ENCODE measurements at regions of chr22 and their contacts with region 1.

Region 1: DNA sequence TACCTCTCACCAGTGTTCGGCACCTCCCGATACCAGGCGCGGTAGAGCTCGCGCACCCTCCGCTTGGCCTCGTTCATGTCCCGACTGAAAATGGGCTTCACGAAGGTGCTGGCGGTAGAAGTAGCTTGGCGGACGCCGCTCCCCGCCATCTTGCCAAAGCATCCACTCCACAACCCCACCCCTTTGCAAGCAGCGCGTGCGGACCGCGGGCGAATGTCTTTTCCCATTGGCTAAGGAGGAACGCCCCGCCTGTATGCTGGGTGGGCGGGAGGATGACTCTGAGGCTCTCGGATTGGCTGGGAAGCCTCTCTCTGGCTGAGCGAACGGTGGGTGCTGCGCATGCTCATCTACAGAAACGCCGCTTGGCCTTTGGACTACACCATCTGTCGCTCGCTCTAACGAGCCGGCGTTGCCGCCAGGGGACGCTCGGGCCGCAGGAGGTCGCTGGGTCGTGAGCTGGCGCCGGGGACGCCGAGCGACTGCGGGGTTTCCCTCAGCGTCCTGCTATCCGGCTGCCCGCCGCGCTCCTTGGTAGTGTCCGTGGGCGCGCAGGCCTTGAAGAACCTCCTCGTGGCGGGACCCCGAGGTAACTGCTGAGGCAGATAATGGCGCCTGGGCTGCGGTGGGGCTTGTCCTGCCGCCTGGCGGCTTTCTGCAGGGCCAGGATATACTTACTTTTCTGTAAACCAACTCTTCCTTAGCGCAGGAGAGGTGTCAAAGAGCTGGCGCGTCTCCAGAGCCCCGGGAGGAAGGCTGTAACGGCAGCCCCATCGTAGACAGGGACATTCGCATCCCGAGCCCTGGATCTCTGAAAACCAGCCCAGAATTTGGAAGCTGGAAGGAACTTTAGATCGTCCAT is at the start of gene NDUFA6:
- DNase-seq: peak; percentile 99
- H3K4me3 Mint-ChIP-seq: peak within 1 kb of the TSS; percentile 98
- H3K27ac Mint-ChIP-seq: peak within 1 kb of the TSS; percentile 100
- H3K4me1 Mint-ChIP-seq: peaks cover 34% of the 10 kb centered on the region
- H3K27me3 Mint-ChIP-seq: no peaks in the 10 kb centered on the region

Region 2: GRCh38 chr22:41966607-41967240 is 124.1 kb before region 1 on chr22:
- CTCF ChIA-PET with region 1: interaction called, 17 read pairs
- DNase-seq: peak; percentile 62
- H3K4me3 Mint-ChIP-seq: no peak overlapping the region
- H3K27ac Mint-ChIP-seq: no peak overlapping the region
- H3K4me1 Mint-ChIP-seq: peaks cover 2% of the 10 kb centered on the region
- H3K27me3 Mint-ChIP-seq: peaks cover 52% of the 10 kb centered on the region

Region 3: GRCh38 chr22:42061041-42061440 is 29.8 kb before region 1 on chr22:
- CTCF ChIA-PET with region 1: no interaction called
- DNase-seq: no peak
- H3K4me3 Mint-ChIP-seq: no peak overlapping the region
- H3K27ac Mint-ChIP-seq: peak overlapping the region; percentile 60
- H3K4me1 Mint-ChIP-seq: no peaks in the 10 kb centered on the region
- H3K27me3 Mint-ChIP-seq: no peaks in the 10 kb centered on the region

Region 4: DNA sequence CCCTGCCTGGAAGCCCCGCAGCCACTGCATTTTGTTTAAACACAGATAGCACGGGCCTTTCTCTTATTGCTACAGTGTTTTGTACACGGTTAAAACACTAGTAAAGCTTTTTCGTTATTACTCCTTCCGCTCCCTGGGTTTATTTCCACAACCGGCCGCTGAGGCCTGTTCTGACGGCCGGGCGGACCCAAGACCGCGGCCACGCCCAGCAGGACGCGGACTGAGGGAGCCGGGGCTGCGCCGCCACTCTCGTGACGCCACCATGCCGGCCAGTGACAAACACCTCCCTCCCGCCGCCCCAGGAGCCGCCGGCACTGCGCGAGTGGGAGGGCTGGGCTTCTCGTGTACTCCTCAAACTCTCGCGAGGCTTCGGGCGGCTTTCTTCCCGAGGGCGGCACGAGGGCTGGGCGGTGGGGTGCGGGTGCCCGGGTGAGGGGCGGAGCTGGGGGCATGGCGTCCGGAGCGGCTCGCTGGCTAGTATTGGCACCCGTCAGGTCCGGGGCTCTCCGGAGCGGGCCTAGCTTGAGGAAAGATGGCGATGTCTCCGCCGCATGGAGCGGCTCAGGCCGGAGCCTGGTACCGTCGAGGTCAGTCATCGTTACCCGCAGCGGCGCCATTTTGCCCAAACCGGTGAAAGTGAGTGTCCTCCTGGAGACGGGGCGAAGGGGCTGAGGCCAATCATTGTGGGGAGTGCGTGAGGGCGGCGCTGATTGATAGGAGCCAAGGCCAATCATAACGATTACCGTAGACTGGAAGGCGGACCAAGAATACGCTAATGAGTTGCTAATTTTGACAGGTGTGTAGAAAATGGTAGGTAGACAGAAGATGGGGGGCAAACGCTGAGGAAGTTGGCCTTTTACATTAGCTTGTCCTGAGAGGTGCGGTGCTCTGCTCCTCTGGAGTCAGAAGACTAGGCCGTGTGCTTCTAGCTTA is 11.2 kb before region 1 on chr22 and contains the start of gene SMDT1:
- CTCF ChIA-PET with region 1: interaction called, 14 read pairs
- DNase-seq: peak; percentile 99
- H3K4me3 Mint-ChIP-seq: peak within 1 kb of the TSS; percentile 94
- H3K27ac Mint-ChIP-seq: peak within 1 kb of the TSS; percentile 92
- H3K4me1 Mint-ChIP-seq: peaks cover 42% of the 10 kb centered on the region
- H3K27me3 Mint-ChIP-seq: no peaks in the 10 kb centered on the region

Region 5: GRCh38 chr22:42437488-42438292 is 346.9 kb after region 1 on chr22:
- CTCF ChIA-PET with region 1: interaction called, 16 read pairs
- DNase-seq: peak; percentile 89
- H3K4me3 Mint-ChIP-seq: peak overlapping the region; percentile 72
- H3K27ac Mint-ChIP-seq: peak overlapping the region; percentile 42
- H3K4me1 Mint-ChIP-seq: peaks cover 33% of the 10 kb centered on the region
- H3K27me3 Mint-ChIP-seq: peaks cover 65% of the 10 kb centered on the region

Region 6: GRCh38 chr22:42444077-42444904 is 353.5 kb after region 1 on chr22:
- CTCF ChIA-PET with region 1: interaction called, 16 read pairs
- DNase-seq: peak; percentile 90
- H3K4me3 Mint-ChIP-seq: peak overlapping the region; percentile 63
- H3K27ac Mint-ChIP-seq: peak overlapping the region; percentile 90
- H3K4me1 Mint-ChIP-seq: peaks cover 30% of the 10 kb centered on the region
- H3K27me3 Mint-ChIP-seq: peaks cover 45% of the 10 kb centered on the region